Tibial artery (tissue), 4 donors: ENCODE measurements at regions of chrX and their contacts with region 1.

Region 1: GRCh38 chrX:140733769-140734342 is 24.3 kb downstream of the LINC00632 start:
- DNase-seq: no peak
- H3K4me3 ChIP-seq: no peak overlapping the region
- H3K27ac ChIP-seq: no peak overlapping the region
- H3K4me1 ChIP-seq: no peaks in the 10 kb centered on the region
- H3K27me3 ChIP-seq: no peaks in the 10 kb centered on the region
- CTCF ChIP-seq: peak; percentile 60 to 62

Region 2: GRCh38 chrX:140701480-140701879 is 32.4 kb before region 1 on chrX:
- intact Hi-C with region 1: loop called (anchors 5 kb)
- DNase-seq: no peak
- H3K4me3 ChIP-seq: no peak overlapping the region
- H3K27ac ChIP-seq: no peak overlapping the region
- H3K4me1 ChIP-seq: no peaks in the 10 kb centered on the region
- H3K27me3 ChIP-seq: no peaks in the 10 kb centered on the region
- CTCF ChIP-seq: peak; percentile 26 to 42